Heart right ventricle (tissue), 16 donors: ENCODE measurements at regions of chr18 and their contacts with region 1.

Region 1: GRCh38 chr18:79786786-79787526 is 10.8 kb upstream of the KCNG2 start:
- DNase-seq: no peak
- ATAC-seq: no peak
- H3K4me3 ChIP-seq: no peak overlapping the region
- H3K27ac ChIP-seq: no peak overlapping the region
- H3K4me1 ChIP-seq: peaks cover 0 to 33% (median 6%) of the 10 kb centered on the region in 9 donors
- H3K27me3 ChIP-seq: peaks cover 24 to 90% (median 75%) of the 10 kb centered on the region in 7 donors
- CTCF ChIP-seq: no peak

Region 2: GRCh38 chr18:79234438-79234837 is 552.5 kb before region 1 on chr18:
- intact Hi-C with region 1: no loop called
- DNase-seq: no peak
- ATAC-seq: no peak
- H3K4me3 ChIP-seq: no peak overlapping the region
- H3K27ac ChIP-seq: no peak overlapping the region
- H3K4me1 ChIP-seq: no peaks in the 10 kb centered on the region
- H3K27me3 ChIP-seq: no peaks in the 10 kb centered on the region
- CTCF ChIP-seq: no peak

Region 3: DNA sequence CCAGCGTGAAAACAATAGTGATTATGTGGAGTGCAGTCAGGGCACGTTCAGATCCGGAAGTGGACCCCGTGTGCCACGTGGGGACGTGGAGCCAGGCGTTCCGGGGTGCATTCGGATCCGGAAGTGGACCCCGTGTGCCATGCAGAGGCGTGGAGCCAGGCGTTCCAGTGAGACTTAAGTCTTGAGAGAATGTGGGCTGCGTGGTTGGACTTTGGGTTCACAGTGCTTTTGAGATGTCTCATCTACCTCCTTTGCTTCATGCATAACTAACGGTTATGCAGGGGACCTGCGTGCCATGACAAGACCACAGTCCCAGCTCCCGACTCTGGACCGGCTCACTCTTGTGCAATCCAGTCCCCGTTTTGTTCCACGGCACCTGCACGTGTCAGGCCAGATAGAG is 78.5 kb before region 1 on chr18:
- intact Hi-C with region 1: no loop called
- DNase-seq: no peak
- ATAC-seq: no peak
- H3K4me3 ChIP-seq: no peak overlapping the region
- H3K27ac ChIP-seq: no peak overlapping the region
- H3K4me1 ChIP-seq: no peaks in the 10 kb centered on the region
- H3K27me3 ChIP-seq: no peaks in the 10 kb centered on the region
- CTCF ChIP-seq: no peak

Region 4: DNA sequence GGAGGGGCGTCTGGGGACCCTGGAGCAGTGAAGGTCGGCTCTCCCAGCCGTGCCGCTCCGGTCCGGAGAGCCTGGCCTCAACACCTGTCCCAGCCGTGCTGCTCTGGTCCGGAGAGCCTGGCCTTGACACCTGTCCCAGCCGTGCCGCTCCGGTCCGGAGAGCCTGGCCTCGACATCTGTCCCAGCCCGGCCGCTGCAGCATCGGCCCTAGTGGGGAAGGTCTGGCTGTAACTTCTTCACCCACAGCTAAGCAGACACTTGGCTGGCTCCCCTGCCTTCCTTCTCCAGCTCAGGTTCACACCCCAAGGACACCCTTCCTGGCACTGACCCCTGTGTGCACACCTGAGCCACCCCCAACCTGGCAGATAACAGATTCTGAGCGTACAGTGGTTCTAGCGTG is 15.3 kb after region 1 on chr18:
- intact Hi-C with region 1: loop called in 1 of 10 experiments (anchors 1 kb)
- DNase-seq: no peak
- ATAC-seq: no peak
- H3K4me3 ChIP-seq: no peak overlapping the region
- H3K27ac ChIP-seq: no peak overlapping the region
- H3K4me1 ChIP-seq: peaks cover 0 to 20% (median 15%) of the 10 kb centered on the region in 9 donors
- H3K27me3 ChIP-seq: peaks cover 12 to 55% (median 50%) of the 10 kb centered on the region in 7 donors
- CTCF ChIP-seq: no peak